Heart left ventricle (tissue), 16 donors: ENCODE measurements at regions of chr15 and their contacts with region 1.

Region 1: DNA sequence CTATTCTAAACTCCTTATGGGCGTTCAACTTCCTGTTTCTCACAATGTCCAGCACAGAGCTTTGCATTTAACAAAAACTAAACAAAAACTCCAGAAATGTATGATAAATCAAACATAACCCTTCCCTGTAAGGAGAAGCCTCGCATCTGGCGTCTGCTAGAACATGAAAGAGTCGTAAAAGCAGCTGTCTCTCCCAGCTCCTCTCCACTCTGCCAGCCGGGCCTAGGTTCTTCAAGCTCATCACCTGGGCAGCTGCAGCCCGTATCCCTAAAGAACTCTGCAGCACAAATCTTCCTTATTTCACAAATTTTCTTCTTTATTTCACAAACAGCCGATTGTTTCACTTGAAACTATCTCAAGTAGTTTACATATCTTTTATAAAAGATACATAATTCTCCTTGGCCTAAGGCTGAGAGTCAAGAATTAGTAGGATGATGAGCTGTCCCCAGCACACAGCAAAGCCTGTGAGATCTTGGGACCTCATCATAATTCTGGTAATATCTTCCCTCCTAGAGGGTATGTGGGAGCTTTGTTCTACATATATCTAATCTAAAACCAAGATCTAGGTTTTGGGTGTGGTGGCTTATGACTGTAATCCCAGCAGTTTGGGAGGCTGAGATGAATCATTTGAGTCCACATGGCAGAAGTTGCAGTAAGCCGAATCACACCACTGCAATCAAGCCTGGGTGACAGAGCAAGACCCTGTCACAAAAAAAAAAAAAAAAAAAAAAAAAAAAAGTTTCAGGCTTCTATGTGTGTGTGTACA is 35.3 kb downstream of the ANXA2 start:
- DNase-seq: peak in 1 of 5 donors; percentile 42
- ATAC-seq: peak in 3 of 4 donors; percentile 71 to 72 (median 71)
- H3K4me3 ChIP-seq: no peak overlapping the region
- H3K27ac ChIP-seq: peak overlapping the region in 10 of 12 donors; percentile 33 to 80 (median 50)
- H3K4me1 ChIP-seq: peaks cover 6 to 63% (median 32%) of the 10 kb centered on the region in 12 donors
- H3K27me3 ChIP-seq: no peaks in the 10 kb centered on the region
- CTCF ChIP-seq: no peak
- POLR2A ChIP-seq: no peak

Region 2: DNA sequence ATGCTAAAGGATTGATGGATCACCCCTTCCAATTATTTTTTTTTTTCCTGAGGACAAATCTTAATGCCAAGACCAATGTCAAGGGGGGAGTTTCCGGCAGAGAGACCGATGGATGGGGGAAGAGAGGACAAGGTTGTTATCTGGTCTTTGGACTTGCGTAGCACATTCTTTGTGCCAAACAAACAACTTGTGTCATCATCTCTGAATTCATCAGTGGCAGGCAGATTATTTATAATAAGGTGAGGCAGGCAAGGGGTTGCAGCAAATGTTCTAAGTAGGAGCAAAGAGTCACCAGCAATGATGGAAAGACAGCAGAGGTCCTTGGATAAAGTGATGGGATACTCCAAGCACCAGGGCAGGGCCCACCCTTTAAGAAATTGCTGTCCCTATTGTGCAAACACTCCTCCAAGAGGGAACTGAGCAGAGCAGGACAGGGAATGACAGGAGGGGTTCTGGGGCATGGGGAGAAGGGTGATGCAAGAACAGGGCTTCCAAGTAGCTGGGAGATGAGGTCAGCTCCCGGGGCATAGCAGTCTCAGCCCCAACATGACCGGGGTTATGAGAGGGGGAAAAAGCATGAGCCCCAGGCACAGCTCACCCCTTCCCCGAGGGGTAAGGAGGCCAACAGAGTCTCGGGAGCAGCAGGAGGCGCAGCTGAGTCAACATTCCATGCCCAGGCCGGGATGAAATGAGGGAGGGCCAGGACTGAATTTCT is 22.1 kb before region 1 on chr15:
- intact Hi-C with region 1: no loop called
- DNase-seq: no peak
- ATAC-seq: peak in 1 of 4 donors; percentile 42
- H3K4me3 ChIP-seq: no peak overlapping the region
- H3K27ac ChIP-seq: no peak overlapping the region
- H3K4me1 ChIP-seq: peaks cover 0 to 5% (median 0%) of the 10 kb centered on the region in 12 donors
- H3K27me3 ChIP-seq: no peaks in the 10 kb centered on the region
- CTCF ChIP-seq: no peak
- POLR2A ChIP-seq: no peak

Region 3: GRCh38 chr15:60426870-60427508 is 64.5 kb after region 1 on chr15:
- intact Hi-C with region 1: loop called in 1 of 10 experiments (anchors 5 kb)
- DNase-seq: no peak
- ATAC-seq: peak; percentile 28 to 86 (median 53)
- H3K4me3 ChIP-seq: no peak overlapping the region
- H3K27ac ChIP-seq: peak overlapping the region in 4 of 12 donors; percentile 9 to 38 (median 18)
- H3K4me1 ChIP-seq: peaks cover 0 to 21% (median 0%) of the 10 kb centered on the region in 12 donors
- H3K27me3 ChIP-seq: no peaks in the 10 kb centered on the region
- CTCF ChIP-seq: no peak
- POLR2A ChIP-seq: no peak

Region 4: GRCh38 chr15:60444289-60444912 is 81.9 kb after region 1 on chr15:
- intact Hi-C with region 1: loop called (anchors 2 to 5 kb)
- DNase-seq: no peak
- ATAC-seq: no peak
- H3K4me3 ChIP-seq: no peak overlapping the region
- H3K27ac ChIP-seq: no peak overlapping the region
- H3K4me1 ChIP-seq: peaks cover 0 to 4% (median 0%) of the 10 kb centered on the region in 12 donors
- H3K27me3 ChIP-seq: no peaks in the 10 kb centered on the region
- CTCF ChIP-seq: peak; percentile 43 to 73 (median 60)
- POLR2A ChIP-seq: no peak

Region 5: DNA sequence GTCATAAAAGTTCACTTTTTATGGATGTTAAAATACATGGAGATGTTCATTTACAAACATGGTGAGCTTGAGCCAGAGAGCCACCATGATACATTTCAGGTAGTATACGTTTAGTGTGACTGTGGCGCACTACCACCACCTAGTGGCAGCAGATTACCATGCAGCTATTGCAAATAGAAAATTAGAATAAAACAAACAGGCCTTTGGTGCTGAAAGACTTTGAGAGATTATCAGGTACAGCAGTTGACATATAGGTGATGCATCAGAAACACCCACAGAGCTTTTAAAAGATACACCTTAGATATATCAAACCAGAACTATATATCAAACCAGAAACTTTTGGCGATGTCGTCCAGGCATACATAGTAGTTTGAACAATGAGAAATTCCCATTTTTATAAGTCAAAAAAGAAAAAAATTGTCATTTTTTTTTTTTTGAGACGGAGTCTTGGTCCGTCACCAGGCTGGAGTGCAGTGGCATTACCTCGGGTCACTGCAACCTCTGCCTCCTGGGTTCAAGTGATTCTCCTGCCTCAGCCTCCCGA is 158.4 kb after region 1 on chr15:
- intact Hi-C with region 1: loop called in 2 of 10 experiments (anchors 5 to 10 kb)
- DNase-seq: peak; percentile 44 to 73 (median 61)
- ATAC-seq: peak in 2 of 4 donors; percentile 32 to 51
- H3K4me3 ChIP-seq: no peak overlapping the region
- H3K27ac ChIP-seq: no peak overlapping the region
- H3K4me1 ChIP-seq: peaks cover 0 to 23% (median 0%) of the 10 kb centered on the region in 12 donors
- H3K27me3 ChIP-seq: no peaks in the 10 kb centered on the region
- CTCF ChIP-seq: peak; percentile 81 to 95 (median 88)
- POLR2A ChIP-seq: no peak

Region 6: DNA sequence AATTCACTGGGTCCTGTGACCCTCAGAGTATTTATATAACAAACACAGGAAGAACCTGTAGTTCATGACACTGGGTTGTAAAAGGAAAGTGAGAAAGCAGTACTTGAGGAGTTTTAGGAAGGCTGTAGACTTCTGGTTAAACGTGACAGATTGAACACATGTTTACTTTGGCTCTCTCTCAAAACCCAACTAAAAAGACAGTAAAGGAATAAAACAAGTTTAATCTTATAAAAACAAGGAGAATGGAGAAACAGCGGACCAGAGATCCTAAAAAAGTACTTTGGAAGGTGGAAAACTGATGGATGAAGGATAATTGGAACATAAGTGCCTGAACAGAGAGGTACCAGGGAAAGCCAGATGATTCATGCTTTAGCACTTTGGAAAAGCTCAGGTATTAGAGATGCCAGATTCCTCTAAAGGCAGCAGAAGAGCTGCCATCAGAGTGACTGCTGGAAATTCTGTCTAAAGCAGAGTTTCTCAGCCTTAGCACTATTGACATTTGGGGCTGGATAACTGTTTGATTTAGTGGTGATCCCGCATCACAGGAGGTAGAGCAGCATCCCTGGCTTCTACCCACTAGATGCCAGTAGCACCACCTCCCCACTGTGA is 1049.5 kb after region 1 on chr15:
- intact Hi-C with region 1: no loop called
- DNase-seq: no peak
- ATAC-seq: no peak
- H3K4me3 ChIP-seq: no peak overlapping the region
- H3K27ac ChIP-seq: no peak overlapping the region
- H3K4me1 ChIP-seq: no peaks in the 10 kb centered on the region
- H3K27me3 ChIP-seq: peaks cover 0 to 6% (median 0%) of the 10 kb centered on the region in 9 donors
- CTCF ChIP-seq: no peak
- POLR2A ChIP-seq: no peak